Caco-2 (cell line): ENCODE measurements at regions of chr7 and their contacts with region 1.

Region 1: DNA sequence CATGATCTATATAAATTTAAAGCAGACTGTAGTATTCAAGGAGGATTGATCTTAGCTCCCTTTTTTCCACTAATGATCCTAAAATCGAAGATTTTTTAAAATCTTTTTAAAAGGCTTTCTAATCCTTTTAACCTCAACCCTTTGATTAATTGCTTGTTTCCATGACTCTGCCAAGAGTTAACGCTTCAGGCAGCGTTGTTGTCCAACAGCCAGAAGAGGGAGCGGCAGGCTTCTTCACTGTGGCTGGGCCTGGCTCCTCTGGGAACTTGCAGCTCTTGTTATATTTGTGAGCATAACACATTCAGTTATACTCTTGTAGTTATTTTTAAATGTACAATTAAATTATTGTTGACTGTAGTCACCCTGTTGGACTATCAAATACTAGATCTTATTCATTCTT is 26.3 kb downstream of the CRCP start:
- DNase-seq: peak; percentile 55 to 59
- H3K4me3 ChIP-seq: no peak overlapping the region
- H3K4me3 Mint-ChIP-seq: no peak overlapping the region
- H3K27ac Mint-ChIP-seq: peak overlapping the region; percentile 43
- H3K4me1 ChIP-seq: peaks cover 28% of the 10 kb centered on the region
- H3K4me1 Mint-ChIP-seq: peaks cover 40% of the 10 kb centered on the region
- H3K27me3 ChIP-seq: no peaks in the 10 kb centered on the region
- H3K27me3 Mint-ChIP-seq: no peaks in the 10 kb centered on the region
- CTCF ChIP-seq: peak in 1 of 2 experiments; percentile 80

Region 2: DNA sequence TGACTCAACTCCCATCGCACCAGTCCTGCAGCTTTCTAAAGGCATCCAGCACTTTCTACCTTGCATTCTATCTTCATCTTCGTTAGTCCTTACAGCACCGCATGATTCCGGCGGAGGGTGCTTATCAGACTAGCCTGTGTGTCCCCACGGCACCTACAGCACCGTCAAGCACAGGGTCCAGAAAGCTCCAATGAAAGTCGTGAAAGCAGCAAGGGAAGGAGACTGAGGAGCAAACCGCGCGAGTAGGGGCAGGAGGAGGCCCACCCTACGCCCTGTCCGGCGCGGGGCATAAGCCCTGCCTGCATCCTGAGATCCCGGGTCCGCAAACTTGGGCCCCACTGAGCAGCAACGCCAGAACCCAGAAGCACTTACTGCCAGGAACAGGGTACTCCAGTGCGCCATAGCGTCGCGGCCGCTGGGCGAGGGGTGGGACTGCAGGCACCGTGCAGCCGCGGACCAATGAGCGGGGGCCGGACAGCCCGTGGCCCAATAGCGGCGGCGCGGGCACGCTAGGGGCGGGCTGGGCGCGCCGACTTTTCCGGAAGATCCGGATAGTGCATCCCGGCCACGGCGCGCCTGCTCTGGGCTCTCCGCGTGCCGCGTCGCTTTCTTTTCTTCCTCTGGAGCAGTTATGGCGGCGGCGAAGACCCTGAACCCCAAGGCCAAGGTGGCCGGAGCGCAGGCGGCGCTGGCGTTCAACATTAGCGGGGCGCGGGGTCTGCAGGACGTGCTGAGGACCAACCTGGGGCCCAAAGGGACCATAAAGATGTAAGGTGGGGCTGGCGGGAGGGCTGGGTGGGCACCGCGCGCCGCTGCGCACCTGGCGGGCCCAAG is 390.2 kb before region 1 on chr7:
- CTCF ChIA-PET with region 1: no interaction called
- POLR2A ChIA-PET with region 1: no interaction called
- intact Hi-C with region 1: no loop called
- DNase-seq: peak; percentile 90 to 95
- H3K4me3 ChIP-seq: peak overlapping the region; percentile 65
- H3K4me3 Mint-ChIP-seq: peak overlapping the region; percentile 90
- H3K27ac Mint-ChIP-seq: peak overlapping the region; percentile 89
- H3K4me1 ChIP-seq: peaks cover 15% of the 10 kb centered on the region
- H3K4me1 Mint-ChIP-seq: peaks cover 4% of the 10 kb centered on the region
- H3K27me3 ChIP-seq: no peaks in the 10 kb centered on the region
- H3K27me3 Mint-ChIP-seq: no peaks in the 10 kb centered on the region
- CTCF ChIP-seq: no peak

Region 3: GRCh38 chr7:66125052-66125708 is 15.7 kb before region 1 on chr7:
- CTCF ChIA-PET with region 1: interaction called, 10 read pairs
- POLR2A ChIA-PET with region 1: no interaction called
- intact Hi-C with region 1: no loop called
- DNase-seq: no peak
- H3K4me3 ChIP-seq: no peak overlapping the region
- H3K4me3 Mint-ChIP-seq: no peak overlapping the region
- H3K27ac Mint-ChIP-seq: no peak overlapping the region
- H3K4me1 ChIP-seq: no peaks in the 10 kb centered on the region
- H3K4me1 Mint-ChIP-seq: peaks cover 10% of the 10 kb centered on the region
- H3K27me3 ChIP-seq: no peaks in the 10 kb centered on the region
- H3K27me3 Mint-ChIP-seq: no peaks in the 10 kb centered on the region
- CTCF ChIP-seq: no peak

Region 4: DNA sequence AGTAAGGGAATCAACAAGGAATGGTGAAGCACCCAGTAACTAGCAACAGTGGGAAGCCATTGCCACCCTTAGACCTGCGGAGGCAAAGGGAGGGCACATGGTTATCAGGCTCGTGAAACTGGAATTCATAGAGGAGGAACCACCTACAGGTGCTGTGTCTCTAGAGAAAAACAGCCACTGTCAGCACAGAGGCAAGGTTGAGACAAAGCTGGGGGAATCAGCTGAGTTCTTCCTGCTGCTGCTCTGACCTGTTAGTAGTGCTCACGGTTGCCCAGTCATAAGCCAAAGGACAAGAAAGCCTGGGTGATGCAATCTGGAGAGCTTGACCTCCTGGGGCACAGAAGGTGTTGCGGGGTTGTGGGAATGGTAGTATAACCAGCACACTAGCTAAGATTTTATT is 174.3 kb after region 1 on chr7:
- CTCF ChIA-PET with region 1: no interaction called
- POLR2A ChIA-PET with region 1: no interaction called
- intact Hi-C with region 1: loop called (anchors 10 kb)
- DNase-seq: no peak
- H3K4me3 ChIP-seq: no peak overlapping the region
- H3K4me3 Mint-ChIP-seq: no peak overlapping the region
- H3K27ac Mint-ChIP-seq: peak overlapping the region; percentile 7
- H3K4me1 ChIP-seq: peaks cover 3% of the 10 kb centered on the region; the same call in 1 of the 2 replicates
- H3K4me1 Mint-ChIP-seq: peaks cover 10% of the 10 kb centered on the region
- H3K27me3 ChIP-seq: no peaks in the 10 kb centered on the region
- H3K27me3 Mint-ChIP-seq: no peaks in the 10 kb centered on the region
- CTCF ChIP-seq: no peak